Heart right ventricle (tissue), 16 donors: ENCODE measurements at regions of chr1 and their contacts with region 1.

Region 1: DNA sequence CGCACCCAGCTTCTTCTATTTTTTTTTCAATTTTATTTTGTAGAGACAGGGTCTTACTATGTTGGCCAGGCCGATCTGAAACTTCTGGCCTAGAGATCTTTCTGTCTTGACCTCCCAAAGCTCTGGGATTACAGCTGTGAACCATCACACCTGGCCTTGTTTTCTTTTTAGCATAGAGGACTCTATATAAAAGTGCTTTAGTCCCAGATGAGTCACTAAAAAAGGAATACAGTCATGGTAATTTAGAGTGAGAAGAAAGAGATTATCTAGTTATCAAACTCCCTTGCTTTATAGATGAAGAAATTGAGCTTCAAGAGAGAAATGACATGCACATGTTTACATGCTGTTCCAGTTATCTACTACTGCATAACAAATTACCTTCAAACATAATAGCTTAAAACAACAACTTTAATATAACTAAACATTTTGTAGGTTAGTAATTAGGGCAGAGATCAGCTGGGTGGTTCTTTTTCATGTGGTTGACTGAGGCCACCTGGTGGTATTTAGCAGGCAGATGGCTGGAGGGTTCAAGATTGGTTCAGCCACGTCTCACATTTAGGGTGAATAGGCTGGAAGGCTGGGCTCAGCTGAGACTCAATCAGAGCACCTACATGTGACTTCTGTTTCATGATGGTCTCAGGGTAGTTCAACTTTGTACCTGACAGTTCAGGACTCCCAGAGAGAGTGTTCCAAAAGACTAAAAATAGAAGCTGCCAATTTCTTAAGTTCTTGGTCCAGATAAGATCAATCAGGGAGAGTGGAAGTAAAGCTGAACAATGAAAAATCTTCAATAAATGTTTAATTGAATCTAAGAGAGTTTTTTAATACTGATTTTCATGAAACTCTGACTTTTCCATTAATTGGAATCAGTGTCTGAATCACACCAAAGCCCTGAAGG is 16.9 kb upstream of the MTF2 start:
- DNase-seq: no peak
- ATAC-seq: peak in 1 of 8 donors; percentile 37
- H3K4me3 ChIP-seq: no peak overlapping the region
- H3K27ac ChIP-seq: no peak overlapping the region
- H3K4me1 ChIP-seq: no peaks in the 10 kb centered on the region
- H3K27me3 ChIP-seq: peaks cover 0 to 8% (median 0%) of the 10 kb centered on the region in 7 donors
- CTCF ChIP-seq: peak in 6 of 9 donors; percentile 35 to 61 (median 56)

Region 2: GRCh38 chr1:92858564-92859399 is 203.4 kb before region 1 on chr1:
- intact Hi-C with region 1: loop called in 2 of 10 experiments (anchors 5 to 10 kb)
- DNase-seq: peak in 1 of 2 donors; percentile 63
- ATAC-seq: peak; percentile 63 to 89 (median 82)
- H3K4me3 ChIP-seq: peak overlapping the region in 7 of 10 donors; percentile 21 to 42 (median 38)
- H3K27ac ChIP-seq: peak overlapping the region in 1 of 10 donors; percentile 3
- H3K4me1 ChIP-seq: peaks cover 0 to 15% (median 5%) of the 10 kb centered on the region in 9 donors
- H3K27me3 ChIP-seq: no peaks in the 10 kb centered on the region
- CTCF ChIP-seq: peak; percentile 89 to 100 (median 96)

Region 3: GRCh38 chr1:93021539-93022134 is 40.5 kb before region 1 on chr1:
- intact Hi-C with region 1: loop called in 1 of 10 experiments (anchors 5 kb)
- DNase-seq: no peak
- ATAC-seq: no peak
- H3K4me3 ChIP-seq: no peak overlapping the region
- H3K27ac ChIP-seq: no peak overlapping the region
- H3K4me1 ChIP-seq: peaks cover 0 to 5% (median 0%) of the 10 kb centered on the region in 9 donors
- H3K27me3 ChIP-seq: peaks cover 0 to 3% (median 0%) of the 10 kb centered on the region in 7 donors
- CTCF ChIP-seq: peak; percentile 27 to 81 (median 69)

Region 4: GRCh38 chr1:93179886-93180722 is 118.0 kb after region 1 on chr1 and contains the start of gene TMED5:
- intact Hi-C with region 1: no loop called
- DNase-seq: peak; percentile 97 to 98
- ATAC-seq: peak; percentile 98 to 99 (median 99)
- H3K4me3 ChIP-seq: peak within 1 kb of the TSS; percentile 63 to 91 (median 81)
- H3K27ac ChIP-seq: peak within 1 kb of the TSS; percentile 93 to 99 (median 98)
- H3K4me1 ChIP-seq: peaks cover 0 to 44% (median 25%) of the 10 kb centered on the region in 9 donors
- H3K27me3 ChIP-seq: no peaks in the 10 kb centered on the region
- CTCF ChIP-seq: peak in 5 of 9 donors; percentile 22 to 29 (median 23)
- total RNA-seq, gene TMED5: 36.7 to 82.4 (median 39.2) TPM

Region 5: GRCh38 chr1:93304716-93305138 is 242.6 kb after region 1 on chr1:
- intact Hi-C with region 1: no loop called
- DNase-seq: peak in 1 of 2 donors; percentile 54
- ATAC-seq: peak in 5 of 8 donors; percentile 31 to 65 (median 52)
- H3K4me3 ChIP-seq: no peak overlapping the region
- H3K27ac ChIP-seq: no peak overlapping the region
- H3K4me1 ChIP-seq: peaks cover 0 to 5% (median 0%) of the 10 kb centered on the region in 9 donors
- H3K27me3 ChIP-seq: no peaks in the 10 kb centered on the region
- CTCF ChIP-seq: peak; percentile 84 to 96 (median 89)